ENCODE measurements at regions of chr9 and their contacts with region 1.

Region 1: DNA sequence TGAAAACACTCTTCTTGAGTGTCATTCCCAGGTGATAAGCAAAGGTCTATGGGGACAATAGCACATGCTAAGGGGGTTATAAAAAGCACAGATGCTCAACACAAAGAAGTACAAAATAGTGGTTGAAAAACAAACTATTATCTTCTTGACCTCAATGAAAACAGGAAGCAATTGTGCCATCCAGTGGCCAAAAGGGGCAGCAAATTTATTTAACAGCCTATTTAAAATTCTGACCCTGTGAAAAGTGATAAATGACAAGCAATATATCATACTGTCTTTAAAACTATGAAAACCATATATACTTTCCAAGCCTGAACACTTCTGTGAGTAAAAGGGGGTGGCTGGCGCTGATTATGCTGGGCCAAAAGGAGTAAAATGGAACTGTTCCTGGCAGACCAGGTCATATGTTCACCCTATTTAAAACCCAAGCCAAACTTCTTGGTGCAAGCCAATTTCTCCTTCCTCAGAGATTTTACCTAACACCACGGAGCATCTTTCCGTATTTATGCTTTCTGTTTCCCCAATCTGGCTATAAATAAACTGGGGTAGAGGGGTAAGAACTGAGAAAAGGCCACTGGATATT is 29.7 kb downstream of the TEX10 start:
- DNase-seq: no peak
- H3K4me3 ChIP-seq: no peak overlapping the region
- H3K27ac ChIP-seq: no peak overlapping the region
- H3K4me1 ChIP-seq: no peaks in the 10 kb centered on the region
- H3K27me3 ChIP-seq: no peaks in the 10 kb centered on the region
- CTCF ChIP-seq: peak in 2 of 3 experiments; percentile 36 to 58

Region 2: DNA sequence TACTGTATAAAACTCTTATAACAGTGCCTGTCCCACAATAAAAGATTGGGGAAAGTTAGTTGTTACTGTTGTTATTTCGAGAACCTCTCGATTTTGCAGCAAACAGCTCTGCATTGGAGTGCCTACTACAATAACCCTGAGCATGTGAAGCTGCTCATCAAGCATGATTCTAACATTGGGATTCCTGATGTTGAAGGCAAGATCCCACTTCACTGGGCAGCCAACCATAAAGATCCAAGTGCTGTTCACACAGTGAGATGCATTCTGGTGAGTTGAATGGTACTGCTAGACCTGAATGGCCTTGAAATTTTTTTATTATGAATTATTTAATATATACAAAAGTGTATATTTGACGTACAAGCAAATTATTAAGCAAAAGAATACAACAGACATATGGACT is 93.5 kb before region 1 on chr9:
- dilution Hi-C with region 1: no loop called
- DNase-seq: no peak
- H3K4me3 ChIP-seq: no peak overlapping the region
- H3K27ac ChIP-seq: no peak overlapping the region
- H3K4me1 ChIP-seq: no peaks in the 10 kb centered on the region
- H3K27me3 ChIP-seq: no peaks in the 10 kb centered on the region
- CTCF ChIP-seq: no peak

Region 3: DNA sequence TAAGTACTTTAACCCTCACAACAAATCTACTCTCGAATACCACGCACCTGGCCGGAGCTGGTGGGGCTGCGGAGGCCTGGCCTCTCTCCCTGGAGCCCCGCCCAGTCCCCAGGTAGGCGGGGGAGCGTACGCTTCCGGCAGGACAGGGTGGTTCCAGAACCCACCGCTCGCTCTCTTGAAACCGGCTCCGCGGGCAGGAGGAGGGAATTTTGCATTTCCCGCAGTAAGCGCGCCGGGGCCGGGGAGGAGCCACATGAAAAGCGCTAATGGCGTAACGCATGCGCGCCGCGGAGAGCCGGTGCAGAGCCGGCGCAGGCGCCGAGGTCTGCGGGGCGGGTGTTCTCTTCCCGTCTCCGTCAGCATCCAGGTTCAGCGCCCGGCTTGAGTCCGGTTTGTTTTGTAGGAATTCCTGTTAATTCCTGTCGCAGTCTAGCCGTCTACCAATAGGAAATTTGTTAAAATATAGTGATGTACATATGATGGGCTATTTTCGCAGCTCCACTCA is 275.6 kb after region 1 on chr9:
- dilution Hi-C with region 1: loop called (anchors 25 kb)
- DNase-seq: no peak
- H3K4me3 ChIP-seq: peak overlapping the region; percentile 40 to 77 (median 74)
- H3K27ac ChIP-seq: no peak overlapping the region
- H3K4me1 ChIP-seq: peaks cover 19% of the 10 kb centered on the region
- H3K27me3 ChIP-seq: peaks cover 5% of the 10 kb centered on the region
- CTCF ChIP-seq: no peak

Measured in keratinocyte (primary cell).